ENCODE measurements at regions of chr20 and their contacts with region 1.

Region 1: GRCh38 chr20:46562373-46563169 is 12.1 kb upstream of the OCSTAMP start:
- DNase-seq: peak; percentile 87
- ATAC-seq: peak; percentile 74
- H3K4me3 ChIP-seq: peak overlapping the region; percentile 24 to 58 (median 29); a peak in 5 of 6 replicates
- H3K27ac ChIP-seq: peak overlapping the region; percentile 55
- H3K4me1 ChIP-seq: peaks cover 72% of the 10 kb centered on the region
- H3K27me3 ChIP-seq: no peaks in the 10 kb centered on the region
- CTCF ChIP-seq: peak; percentile 93
- EP300 ChIP-seq: peak; percentile 41 to 46; a peak in 2 of 4 replicates
- POLR2A ChIP-seq: no peak; a peak in 1 of 4 replicates
- RAD21 ChIP-seq: peak; percentile 65; the same call in 1 of the 2 replicates

Region 2: GRCh38 chr20:46512943-46513844 is 49.4 kb before region 1 on chr20 and contains the start of gene ZNF334:
- CTCF ChIA-PET with region 1: no interaction called
- POLR2A ChIA-PET with region 1: no interaction called
- in situ Hi-C with region 1: no loop called
- intact Hi-C with region 1: no loop called
- DNase-seq: peak; percentile 69
- ATAC-seq: peak; percentile 95
- H3K4me3 ChIP-seq: peak within 1 kb of the TSS; percentile 49 to 67 (median 67)
- H3K27ac ChIP-seq: peak within 1 kb of the TSS; percentile 57
- H3K4me1 ChIP-seq: no peaks in the 10 kb centered on the region
- H3K27me3 ChIP-seq: peaks cover 0 to 15% of the 10 kb centered on the region in 2 experiments; a peak in 2 of 5 replicates
- CTCF ChIP-seq: no peak
- EP300 ChIP-seq: no peak
- POLR2A ChIP-seq: peak; percentile 64 to 82
- RAD21 ChIP-seq: no peak; the same call in 1 of the 2 replicates
- total RNA-seq, gene ZNF334: 4.8 and 5.3 TPM in 2 replicates

Region 3: GRCh38 chr20:46699651-46700359 is 137.2 kb after region 1 on chr20:
- CTCF ChIA-PET with region 1: interaction called, 5 read pairs
- POLR2A ChIA-PET with region 1: no interaction called
- in situ Hi-C with region 1: no loop called
- intact Hi-C with region 1: loop called (anchors 1 kb)
- DNase-seq: peak; percentile 66
- ATAC-seq: peak; percentile 83
- H3K4me3 ChIP-seq: no peak overlapping the region; a peak in 1 of 6 replicates
- H3K27ac ChIP-seq: no peak overlapping the region
- H3K4me1 ChIP-seq: peaks cover 66% of the 10 kb centered on the region
- H3K27me3 ChIP-seq: no peaks in the 10 kb centered on the region
- CTCF ChIP-seq: peak; percentile 96
- EP300 ChIP-seq: no peak
- POLR2A ChIP-seq: no peak
- RAD21 ChIP-seq: peak; percentile 92